Mammary epithelial cell (primary cell): ENCODE measurements at regions of chr5 and their contacts with region 1.

Region 1: GRCh38 chr5:140632150-140633020 is 590 bp downstream of the CD14 start:
- DNase-seq: peak; percentile 62
- H3K4me3 ChIP-seq: peak overlapping the region; percentile 4 to 44 (median 40)
- H3K27ac ChIP-seq: no peak overlapping the region
- H3K4me1 ChIP-seq: peaks cover 28% of the 10 kb centered on the region
- H3K27me3 ChIP-seq: no peaks in the 10 kb centered on the region
- CTCF ChIP-seq: peak in 1 of 2 donors; percentile 4

Region 2: DNA sequence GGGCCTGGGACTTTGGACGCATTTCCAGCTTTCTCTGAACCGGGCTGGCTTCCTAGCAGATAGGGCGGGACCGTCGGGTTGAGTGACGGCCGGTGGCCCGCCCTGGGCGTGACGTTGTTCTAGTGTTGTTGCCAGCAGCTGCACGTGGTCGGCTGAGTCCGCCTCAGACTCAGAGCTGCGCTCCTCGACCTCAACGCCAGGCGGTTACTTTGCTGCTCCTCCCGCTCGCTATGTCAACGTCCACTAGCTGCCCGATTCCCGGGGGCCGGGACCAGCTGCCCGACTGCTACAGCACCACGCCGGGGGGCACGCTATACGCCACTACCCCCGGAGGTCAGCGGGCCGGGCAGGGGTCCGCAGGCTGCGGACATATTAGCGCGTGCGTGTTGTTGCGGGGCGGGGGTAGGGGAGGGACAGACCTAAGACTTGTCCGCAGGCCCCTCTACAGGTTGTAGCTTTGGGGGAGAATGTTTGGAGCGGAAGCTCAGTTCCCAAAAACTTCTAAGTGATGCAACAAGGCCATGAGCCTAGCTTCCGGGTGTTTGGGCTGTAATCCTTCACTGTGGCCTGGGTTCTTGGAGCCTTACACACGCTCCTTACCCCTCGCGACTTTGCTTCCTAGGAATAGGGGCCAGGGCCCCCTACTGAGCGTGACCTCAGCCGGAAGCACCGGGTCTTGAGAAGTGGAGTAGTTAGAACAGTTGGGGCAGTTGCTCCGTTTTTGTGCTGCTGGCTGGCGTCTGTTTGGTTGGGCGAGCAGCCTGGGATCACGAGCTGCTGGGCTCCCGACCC is 84.7 kb before region 1 on chr5 and contains the start of gene EIF4EBP3:
- CTCF ChIA-PET with region 1: interaction called, 4 read pairs
- dilution Hi-C with region 1: no loop called
- in situ Hi-C with region 1: no loop called
- intact Hi-C with region 1: loop called (anchors 1 kb)
- DNase-seq: peak; percentile 87
- H3K4me3 ChIP-seq: peak within 1 kb of the TSS in 2 of 3 experiments; percentile 34 to 55
- H3K27ac ChIP-seq: no peak within 1 kb of the TSS
- H3K4me1 ChIP-seq: peaks cover 13% of the 10 kb centered on the region
- H3K27me3 ChIP-seq: no peaks in the 10 kb centered on the region
- CTCF ChIP-seq: peak; percentile 51 to 69
- total RNA-seq, gene EIF4EBP3: 1.8 to 6.0 TPM

Region 3: GRCh38 chr5:140564196-140565023 is 68.0 kb before region 1 on chr5 and contains the starts of genes APBB3 and SLC35A4:
- CTCF ChIA-PET with region 1: interaction called, 3 read pairs
- dilution Hi-C with region 1: no loop called
- in situ Hi-C with region 1: loop called in 1 of 2 experiments (anchors 5 kb)
- intact Hi-C with region 1: loop called (anchors 1 kb)
- DNase-seq: peak; percentile 96
- H3K4me3 ChIP-seq: peak within 1 kb of the TSS; percentile 88 to 92 (median 90)
- H3K27ac ChIP-seq: peak within 1 kb of the TSS; percentile 82
- H3K4me1 ChIP-seq: peaks cover 18% of the 10 kb centered on the region
- H3K27me3 ChIP-seq: no peaks in the 10 kb centered on the region
- CTCF ChIP-seq: no peak
- total RNA-seq, gene APBB3: 12.2 to 18.4 TPM
- total RNA-seq, gene SLC35A4: 24.0 to 62.2 TPM

Region 4: GRCh38 chr5:140591747-140592372 is 40.5 kb before region 1 on chr5:
- CTCF ChIA-PET with region 1: no interaction called
- dilution Hi-C with region 1: no loop called
- in situ Hi-C with region 1: no loop called
- intact Hi-C with region 1: loop called (anchors 5 kb)
- DNase-seq: peak; percentile 66
- H3K4me3 ChIP-seq: no peak overlapping the region
- H3K27ac ChIP-seq: no peak overlapping the region
- H3K4me1 ChIP-seq: peaks cover 32% of the 10 kb centered on the region
- H3K27me3 ChIP-seq: no peaks in the 10 kb centered on the region
- CTCF ChIP-seq: no peak

Region 5: GRCh38 chr5:140734354-140734753 is 102.0 kb after region 1 on chr5:
- CTCF ChIA-PET with region 1: no interaction called
- dilution Hi-C with region 1: no loop called
- in situ Hi-C with region 1: no loop called
- intact Hi-C with region 1: no loop called
- DNase-seq: no peak
- H3K4me3 ChIP-seq: no peak overlapping the region
- H3K27ac ChIP-seq: no peak overlapping the region
- H3K4me1 ChIP-seq: no peaks in the 10 kb centered on the region
- H3K27me3 ChIP-seq: no peaks in the 10 kb centered on the region
- CTCF ChIP-seq: peak; percentile 19 to 44